Esophagus muscularis mucosa (tissue), 4 donors: ENCODE measurements at regions of chr14 and their contacts with region 1.

Region 1: GRCh38 chr14:24431569-24432258 is 2.0 kb downstream of the KHNYN start:
- DNase-seq: peak; percentile 94
- H3K4me3 ChIP-seq: peak overlapping the region; percentile 66 to 87 (median 70)
- H3K27ac ChIP-seq: peak overlapping the region; percentile 92 to 98 (median 92)
- H3K4me1 ChIP-seq: peaks cover 46 to 62% (median 52%) of the 10 kb centered on the region in 4 donors
- H3K27me3 ChIP-seq: no peaks in the 10 kb centered on the region
- CTCF ChIP-seq: peak; percentile 82 to 88 (median 83)
- EP300 ChIP-seq: no peak
- POLR2A ChIP-seq: no peak

Region 2: GRCh38 chr14:24141097-24141880 is 290.4 kb before region 1 on chr14 and contains the start of gene EMC9:
- intact Hi-C with region 1: loop called (anchors 10 kb)
- DNase-seq: peak; percentile 100
- H3K4me3 ChIP-seq: peak within 1 kb of the TSS; percentile 70 to 81 (median 74)
- H3K27ac ChIP-seq: peak within 1 kb of the TSS; percentile 90 to 94 (median 92)
- H3K4me1 ChIP-seq: peaks cover 48 to 73% (median 66%) of the 10 kb centered on the region in 4 donors
- H3K27me3 ChIP-seq: no peaks in the 10 kb centered on the region
- CTCF ChIP-seq: peak; percentile 40 to 64 (median 64)
- EP300 ChIP-seq: no peak
- POLR2A ChIP-seq: peak; percentile 74
- total RNA-seq, gene EMC9: 8.8 to 14.4 (median 12.2) TPM

Region 3: GRCh38 chr14:24212924-24213865 is 218.5 kb before region 1 on chr14 and contains the start of gene CHMP4A:
- intact Hi-C with region 1: no loop called
- DNase-seq: peak; percentile 100
- H3K4me3 ChIP-seq: peak within 1 kb of the TSS; percentile 75 to 97 (median 81)
- H3K27ac ChIP-seq: peak within 1 kb of the TSS; percentile 92 to 99 (median 96)
- H3K4me1 ChIP-seq: peaks cover 26 to 56% (median 43%) of the 10 kb centered on the region in 4 donors
- H3K27me3 ChIP-seq: peaks cover 0 to 6% (median 0%) of the 10 kb centered on the region in 4 donors
- CTCF ChIP-seq: peak in 1 of 3 experiments; percentile 26
- EP300 ChIP-seq: no peak
- POLR2A ChIP-seq: peak; percentile 89
- total RNA-seq, gene CHMP4A: 75.4 to 135 (median 94.9) TPM

Region 4: DNA sequence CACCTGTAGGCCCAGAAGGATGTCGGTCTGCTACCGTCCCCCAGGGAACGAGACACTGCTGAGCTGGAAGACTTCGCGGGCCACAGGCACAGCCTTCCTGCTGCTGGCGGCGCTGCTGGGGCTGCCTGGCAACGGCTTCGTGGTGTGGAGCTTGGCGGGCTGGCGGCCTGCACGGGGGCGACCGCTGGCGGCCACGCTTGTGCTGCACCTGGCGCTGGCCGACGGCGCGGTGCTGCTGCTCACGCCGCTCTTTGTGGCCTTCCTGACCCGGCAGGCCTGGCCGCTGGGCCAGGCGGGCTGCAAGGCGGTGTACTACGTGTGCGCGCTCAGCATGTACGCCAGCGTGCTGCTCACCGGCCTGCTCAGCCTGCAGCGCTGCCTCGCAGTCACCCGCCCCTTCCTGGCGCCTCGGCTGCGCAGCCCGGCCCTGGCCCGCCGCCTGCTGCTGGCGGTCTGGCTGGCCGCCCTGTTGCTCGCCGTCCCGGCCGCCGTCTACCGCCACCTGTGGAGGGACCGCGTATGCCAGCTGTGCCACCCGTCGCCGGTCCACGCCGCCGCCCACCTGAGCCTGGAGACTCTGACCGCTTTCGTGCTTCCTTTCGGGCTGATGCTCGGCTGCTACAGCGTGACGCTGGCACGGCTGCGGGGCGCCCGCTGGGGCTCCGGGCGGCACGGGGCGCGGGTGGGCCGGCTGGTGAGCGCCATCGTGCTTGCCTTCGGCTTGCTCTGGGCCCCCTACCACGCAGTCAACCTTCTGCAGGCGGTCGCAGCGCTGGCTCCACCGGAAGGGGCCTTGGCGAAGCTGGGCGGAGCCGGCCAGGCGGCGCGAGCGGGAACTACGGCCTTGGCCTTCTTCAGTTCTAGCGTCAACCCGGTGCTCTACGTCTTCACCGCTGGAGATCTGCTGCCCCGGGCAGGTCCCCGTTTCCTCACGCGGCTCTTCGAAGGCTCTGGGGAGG is 120.8 kb before region 1 on chr14 and contains the start of gene LTB4R:
- intact Hi-C with region 1: loop called (anchors 5 kb)
- DNase-seq: no peak
- H3K4me3 ChIP-seq: peak within 1 kb of the TSS; percentile 64 to 73 (median 66)
- H3K27ac ChIP-seq: peak within 1 kb of the TSS; percentile 77 to 90 (median 84)
- H3K4me1 ChIP-seq: peaks cover 46 to 77% (median 57%) of the 10 kb centered on the region in 4 donors
- H3K27me3 ChIP-seq: peaks cover 0 to 13% (median under 1%) of the 10 kb centered on the region in 4 donors
- CTCF ChIP-seq: peak; percentile 27 to 48 (median 30)
- EP300 ChIP-seq: no peak
- POLR2A ChIP-seq: no peak
- total RNA-seq, gene LTB4R: 0.42 to 6.0 (median 2.9) TPM

Region 5: GRCh38 chr14:24332268-24332993 is 99.3 kb before region 1 on chr14:
- intact Hi-C with region 1: loop called (anchors 2 kb)
- DNase-seq: no peak
- H3K4me3 ChIP-seq: peak overlapping the region; percentile 21 to 56 (median 44)
- H3K27ac ChIP-seq: no peak overlapping the region
- H3K4me1 ChIP-seq: peaks cover 32 to 54% (median 39%) of the 10 kb centered on the region in 4 donors
- H3K27me3 ChIP-seq: peaks cover 0 to 50% (median 21%) of the 10 kb centered on the region in 4 donors
- CTCF ChIP-seq: peak; percentile 63 to 77 (median 73)
- EP300 ChIP-seq: no peak
- POLR2A ChIP-seq: no peak

Region 6: GRCh38 chr14:24366721-24367513 is 64.8 kb before region 1 on chr14:
- intact Hi-C with region 1: loop called (anchors 1 kb)
- DNase-seq: peak; percentile 96
- H3K4me3 ChIP-seq: peak overlapping the region; percentile 80 to 81 (median 80)
- H3K27ac ChIP-seq: peak overlapping the region; percentile 97 to 98 (median 98)
- H3K4me1 ChIP-seq: peaks cover 35 to 72% (median 68%) of the 10 kb centered on the region in 4 donors
- H3K27me3 ChIP-seq: no peaks in the 10 kb centered on the region
- CTCF ChIP-seq: no peak
- EP300 ChIP-seq: no peak
- POLR2A ChIP-seq: peak; percentile 22

Region 7: DNA sequence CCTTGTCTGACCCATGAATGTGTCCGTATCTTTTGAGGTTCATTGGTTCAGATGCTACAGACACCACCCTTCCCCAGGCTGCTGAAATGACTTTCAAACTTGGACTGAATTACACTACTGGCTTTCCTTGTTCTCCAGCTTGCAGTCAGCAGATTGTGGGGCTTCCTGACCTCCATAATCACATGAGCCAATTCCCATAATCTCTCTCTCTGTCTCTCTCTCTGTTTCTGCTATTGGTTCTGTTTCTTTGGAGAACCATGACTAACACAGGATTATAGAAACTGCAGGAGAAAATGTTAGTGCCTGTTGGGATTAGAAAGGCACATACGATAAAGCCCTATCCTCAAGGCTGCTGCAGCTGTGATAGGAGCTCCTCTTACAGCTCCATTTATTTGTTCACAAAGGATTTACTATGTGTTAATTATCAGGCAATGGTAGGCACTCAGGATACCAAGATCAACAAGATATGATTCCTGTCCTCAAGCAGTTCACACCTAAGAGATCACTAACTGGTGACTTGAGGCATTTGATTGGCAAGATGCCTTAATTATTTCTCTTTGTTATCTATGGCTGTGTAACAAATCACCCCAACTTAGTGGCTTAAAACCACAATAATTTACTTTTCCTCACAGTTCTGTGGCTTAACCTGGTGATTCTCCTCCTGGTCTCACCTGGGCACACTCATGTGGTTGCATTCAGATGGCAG is 43.1 kb before region 1 on chr14:
- intact Hi-C with region 1: no loop called
- DNase-seq: no peak
- H3K4me3 ChIP-seq: no peak overlapping the region
- H3K27ac ChIP-seq: no peak overlapping the region
- H3K4me1 ChIP-seq: peaks cover 0 to 4% (median 0%) of the 10 kb centered on the region in 4 donors
- H3K27me3 ChIP-seq: peaks cover 0 to 4% (median 0%) of the 10 kb centered on the region in 4 donors
- CTCF ChIP-seq: no peak
- EP300 ChIP-seq: no peak
- POLR2A ChIP-seq: no peak

Region 8: GRCh38 chr14:24398653-24399446 is 32.9 kb before region 1 on chr14 and contains the start of gene NYNRIN:
- intact Hi-C with region 1: loop called (anchors 5 kb)
- DNase-seq: no peak
- H3K4me3 ChIP-seq: peak within 1 kb of the TSS; percentile 72 to 88 (median 74)
- H3K27ac ChIP-seq: peak within 1 kb of the TSS; percentile 74 to 85 (median 77)
- H3K4me1 ChIP-seq: peaks cover 47 to 63% (median 62%) of the 10 kb centered on the region in 4 donors
- H3K27me3 ChIP-seq: no peaks in the 10 kb centered on the region
- CTCF ChIP-seq: no peak
- EP300 ChIP-seq: no peak
- POLR2A ChIP-seq: no peak
- total RNA-seq, gene NYNRIN: 8.0 to 21.2 (median 13.4) TPM

Region 9: GRCh38 chr14:24473211-24473610 is 41.5 kb after region 1 on chr14:
- intact Hi-C with region 1: no loop called
- DNase-seq: no peak
- H3K4me3 ChIP-seq: no peak overlapping the region
- H3K27ac ChIP-seq: no peak overlapping the region
- H3K4me1 ChIP-seq: no peaks in the 10 kb centered on the region
- H3K27me3 ChIP-seq: no peaks in the 10 kb centered on the region
- CTCF ChIP-seq: no peak
- EP300 ChIP-seq: no peak
- POLR2A ChIP-seq: no peak

Region 10: GRCh38 chr14:24734878-24735500 is 303.3 kb after region 1 on chr14:
- intact Hi-C with region 1: no loop called
- DNase-seq: no peak
- H3K4me3 ChIP-seq: no peak overlapping the region
- H3K27ac ChIP-seq: no peak overlapping the region
- H3K4me1 ChIP-seq: peaks cover 0 to 11% (median 8%) of the 10 kb centered on the region in 4 donors
- H3K27me3 ChIP-seq: no peaks in the 10 kb centered on the region
- CTCF ChIP-seq: peak; percentile 76 to 85 (median 79)
- EP300 ChIP-seq: no peak
- POLR2A ChIP-seq: no peak